Activated CD4-positive, alpha-beta T cell treated with anti-CD3 and anti-CD28 coated beads, Interleukin-2, amount 10 ng/mL, durations not matched to agents 24 days and 14 days (primary cell): ENCODE measurements at regions of chr7 and their contacts with region 1.

Region 1: DNA sequence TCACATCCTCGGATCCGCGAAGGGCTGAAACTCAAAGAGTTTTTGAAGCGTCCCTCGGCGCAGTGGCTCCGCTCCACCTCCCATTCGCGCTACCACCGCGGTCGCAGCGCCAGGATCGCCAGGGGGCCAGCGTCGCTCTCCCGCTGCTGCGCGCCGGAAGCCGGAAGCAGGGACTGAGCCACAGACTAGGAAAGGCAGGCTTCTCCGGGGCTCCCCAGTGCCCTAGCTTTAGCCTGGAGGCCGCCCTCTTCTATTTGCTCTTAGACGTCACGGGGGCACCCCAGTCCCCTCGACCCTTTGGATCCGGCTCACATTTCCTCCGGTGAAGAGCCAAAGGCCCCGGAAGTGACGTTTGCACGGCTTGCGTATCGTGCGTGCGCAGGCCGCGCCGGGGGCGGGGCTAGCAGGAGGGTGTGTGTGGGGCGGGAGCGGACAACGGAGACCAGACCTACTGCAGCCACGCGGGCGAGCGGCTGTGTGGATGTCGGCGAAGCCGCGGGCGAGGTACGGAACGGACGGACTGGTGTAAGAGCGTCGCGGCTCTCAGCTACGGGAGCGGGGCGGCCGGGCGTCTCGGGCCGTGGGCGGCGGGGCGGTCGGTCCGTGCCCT is 25.5 kb downstream of the KCTD7 start:
- DNase-seq: peak; percentile 100
- H3K4me3 Mint-ChIP-seq: peak overlapping the region; percentile 97
- H3K27ac Mint-ChIP-seq: peak overlapping the region; percentile 97
- H3K4me1 Mint-ChIP-seq: peaks cover 22% of the 10 kb centered on the region
- H3K27me3 Mint-ChIP-seq: no peaks in the 10 kb centered on the region

Region 2: GRCh38 chr7:66114793-66115649 is 539.2 kb before region 1 on chr7 and contains the start of gene CRCP:
- intact Hi-C with region 1: loop called (anchors 10 kb)
- DNase-seq: peak; percentile 95
- H3K4me3 Mint-ChIP-seq: peak within 1 kb of the TSS; percentile 100
- H3K27ac Mint-ChIP-seq: peak within 1 kb of the TSS; percentile 98
- H3K4me1 Mint-ChIP-seq: peaks cover 37% of the 10 kb centered on the region
- H3K27me3 Mint-ChIP-seq: no peaks in the 10 kb centered on the region
- total RNA-seq, gene CRCP: 37.2 and 41.9 TPM in 2 replicates

Region 3: GRCh38 chr7:66557608-66558143 is 96.6 kb before region 1 on chr7:
- intact Hi-C with region 1: loop called (anchors 1 kb)
- DNase-seq: peak; percentile 94
- H3K4me3 Mint-ChIP-seq: no peak overlapping the region
- H3K27ac Mint-ChIP-seq: no peak overlapping the region
- H3K4me1 Mint-ChIP-seq: peaks cover 3% of the 10 kb centered on the region
- H3K27me3 Mint-ChIP-seq: no peaks in the 10 kb centered on the region

Region 4: DNA sequence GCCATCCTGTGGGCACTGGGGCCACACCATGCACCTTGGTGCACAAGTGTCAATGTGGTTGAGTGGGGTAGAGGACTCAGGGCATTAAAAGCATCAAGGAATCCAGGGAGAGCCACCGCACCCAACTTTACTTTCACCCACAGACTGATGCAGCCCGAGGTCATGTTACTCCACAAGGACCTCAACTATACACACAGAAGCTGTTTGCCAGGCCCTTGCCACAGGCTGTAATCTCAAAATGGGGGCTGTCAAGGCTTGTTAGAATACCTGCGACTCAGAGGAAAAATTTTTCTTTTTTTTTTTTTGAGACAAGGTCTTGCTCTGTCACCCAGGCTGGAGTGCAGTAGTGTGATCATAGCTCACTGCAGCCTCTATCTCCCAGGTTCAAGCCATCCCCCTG is 52.1 kb before region 1 on chr7:
- intact Hi-C with region 1: no loop called
- DNase-seq: no peak
- H3K4me3 Mint-ChIP-seq: no peak overlapping the region
- H3K27ac Mint-ChIP-seq: no peak overlapping the region
- H3K4me1 Mint-ChIP-seq: no peaks in the 10 kb centered on the region
- H3K27me3 Mint-ChIP-seq: peaks cover 2% of the 10 kb centered on the region

Region 5: GRCh38 chr7:66628361-66629140 is 25.7 kb before region 1 on chr7 and contains the start of gene KCTD7:
- intact Hi-C with region 1: loop called (anchors 1 kb)
- DNase-seq: peak; percentile 98
- H3K4me3 Mint-ChIP-seq: peak within 1 kb of the TSS; percentile 90
- H3K27ac Mint-ChIP-seq: peak within 1 kb of the TSS; percentile 84
- H3K4me1 Mint-ChIP-seq: peaks cover 44% of the 10 kb centered on the region
- H3K27me3 Mint-ChIP-seq: no peaks in the 10 kb centered on the region
- total RNA-seq, gene KCTD7: 8.9 and 9.2 TPM in 2 replicates

Region 6: GRCh38 chr7:66920769-66921395 is 266.7 kb after region 1 on chr7 and contains the start of gene TMEM248:
- intact Hi-C with region 1: loop called (anchors 1 kb)
- DNase-seq: peak; percentile 98
- H3K4me3 Mint-ChIP-seq: peak within 1 kb of the TSS; percentile 97
- H3K27ac Mint-ChIP-seq: peak within 1 kb of the TSS; percentile 98
- H3K4me1 Mint-ChIP-seq: peaks cover 21% of the 10 kb centered on the region
- H3K27me3 Mint-ChIP-seq: no peaks in the 10 kb centered on the region
- total RNA-seq, gene TMEM248: 88.4 and 92.2 TPM in 2 replicates